HAP-1 (cell line): ENCODE measurements at regions of chr12 and their contacts with region 1.

Region 1: DNA sequence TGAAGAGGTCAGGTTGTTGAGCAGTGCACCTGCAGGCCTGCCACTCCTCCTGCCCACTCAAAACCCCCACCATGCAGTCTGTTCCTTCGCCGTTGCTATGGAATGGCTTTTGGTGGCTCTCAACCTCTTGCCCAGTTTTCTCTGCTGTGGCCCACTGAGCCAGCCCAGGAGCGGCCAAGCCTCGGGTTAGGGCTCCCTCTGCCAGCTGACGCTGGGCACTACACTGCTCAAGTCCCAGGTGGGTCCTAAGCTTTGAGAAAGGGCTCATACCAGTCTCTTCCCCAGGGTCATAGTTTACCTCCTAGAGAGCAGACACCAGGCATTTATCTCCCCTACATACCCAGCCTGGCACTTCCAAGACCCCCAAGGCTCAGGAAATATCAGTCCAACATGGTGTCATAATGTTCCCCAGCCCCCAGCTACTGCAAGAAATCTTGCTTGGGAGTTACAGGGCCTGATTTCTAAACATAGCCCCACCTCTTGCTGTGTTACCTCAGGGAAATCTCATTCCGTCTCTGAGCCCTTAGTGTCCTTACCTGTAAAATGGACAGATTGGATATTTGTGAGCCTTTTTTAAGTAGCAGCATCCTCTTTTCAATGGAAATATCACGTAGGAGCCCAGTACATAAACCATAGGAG is 59.4 kb downstream of the TSPAN11 start:
- DNase-seq: peak; percentile 28 to 70
- H3K4me3 ChIP-seq: no peak overlapping the region
- H3K4me1 ChIP-seq: no peaks in the 10 kb centered on the region
- H3K27me3 ChIP-seq: no peaks in the 10 kb centered on the region

Region 2: GRCh38 chr12:30822385-30823155 is 163.4 kb before region 1 on chr12:
- in situ Hi-C with region 1: no loop called
- DNase-seq: peak in 1 of 2 experiments; percentile 42
- H3K4me3 ChIP-seq: no peak overlapping the region
- H3K4me1 ChIP-seq: no peaks in the 10 kb centered on the region
- H3K27me3 ChIP-seq: peaks cover 6% of the 10 kb centered on the region; the same call in 1 of the 2 replicates

Region 3: GRCh38 chr12:30847259-30847658 is 138.7 kb before region 1 on chr12:
- in situ Hi-C with region 1: loop called (anchors 10 kb)
- DNase-seq: peak; percentile 34 to 51
- H3K4me3 ChIP-seq: no peak overlapping the region
- H3K4me1 ChIP-seq: no peaks in the 10 kb centered on the region
- H3K27me3 ChIP-seq: peaks cover 5% of the 10 kb centered on the region; the same call in 1 of the 2 replicates

Region 4: DNA sequence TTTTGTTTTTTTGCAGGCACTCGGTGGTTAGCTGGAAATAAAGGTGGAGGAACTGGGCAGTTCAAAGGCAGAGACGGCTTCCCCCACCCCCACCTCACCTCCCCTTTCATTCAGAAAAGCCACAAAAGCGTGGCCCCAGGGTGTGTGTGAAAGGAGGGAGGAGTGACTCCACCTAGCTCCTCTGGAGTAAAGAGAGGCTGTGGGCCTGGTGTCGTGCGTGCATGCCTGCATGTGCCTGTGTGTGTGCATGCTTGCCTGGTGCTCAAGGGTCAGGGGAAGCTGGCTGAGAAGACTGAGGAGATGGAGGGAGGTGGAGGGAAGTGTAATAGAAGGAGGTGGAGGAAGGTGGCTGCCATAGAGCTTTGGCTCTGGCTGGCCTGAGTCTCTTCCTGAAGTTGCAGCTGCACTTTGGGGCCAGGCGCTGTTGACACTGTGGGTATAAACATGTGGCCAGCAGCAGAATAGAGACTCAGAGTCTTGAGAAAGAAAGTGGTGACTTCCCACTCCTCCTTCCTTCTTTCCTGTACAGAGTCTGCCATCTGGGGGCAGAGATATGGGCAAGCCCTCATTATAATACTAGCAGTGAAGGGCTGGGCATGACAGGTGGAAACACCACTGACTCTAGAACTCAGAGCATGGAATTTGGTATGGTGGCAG is 377.0 kb after region 1 on chr12:
- in situ Hi-C with region 1: no loop called
- DNase-seq: peak; percentile 80 to 88
- H3K4me3 ChIP-seq: no peak overlapping the region
- H3K4me1 ChIP-seq: peaks cover 21% of the 10 kb centered on the region
- H3K27me3 ChIP-seq: no peaks in the 10 kb centered on the region